GM18951 (cell line): ENCODE measurements at regions of chr5 and their contacts with region 1.

Region 1: DNA sequence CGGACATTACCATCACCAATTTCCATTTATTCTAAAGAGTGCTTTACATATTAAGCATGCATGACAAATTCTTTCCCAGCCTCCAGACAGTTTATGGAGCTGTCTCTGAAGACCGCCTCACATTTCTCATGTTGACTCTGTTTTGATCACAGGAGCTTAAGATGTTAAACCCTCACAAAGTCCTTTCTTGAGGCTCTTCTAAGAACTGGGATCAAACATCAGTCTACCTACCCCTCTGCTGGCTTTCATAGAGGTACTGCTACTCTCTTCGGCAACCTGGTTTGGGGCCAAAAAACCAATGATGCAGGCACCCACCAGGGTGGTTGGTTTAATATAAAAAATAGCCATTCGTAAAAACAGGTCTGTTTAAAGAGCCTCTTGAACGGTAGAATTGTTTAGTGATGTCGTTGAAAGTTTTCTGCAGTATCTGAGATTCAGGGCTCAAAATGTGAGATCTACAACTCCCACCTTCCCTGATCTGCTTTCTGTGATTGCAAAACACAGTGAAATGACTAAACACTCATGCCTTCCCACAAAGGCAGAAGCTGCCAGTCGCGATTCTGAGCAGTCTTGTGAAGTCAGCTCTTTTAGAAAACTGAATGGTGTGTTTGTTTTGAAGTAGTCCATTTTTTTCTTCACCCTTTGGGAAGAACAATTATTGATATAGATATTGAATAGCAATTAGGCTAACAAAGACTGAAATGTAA is 3.5 kb downstream of the RXFP3 start:
- POLR2A ChIP-seq: no peak

Region 2: DNA sequence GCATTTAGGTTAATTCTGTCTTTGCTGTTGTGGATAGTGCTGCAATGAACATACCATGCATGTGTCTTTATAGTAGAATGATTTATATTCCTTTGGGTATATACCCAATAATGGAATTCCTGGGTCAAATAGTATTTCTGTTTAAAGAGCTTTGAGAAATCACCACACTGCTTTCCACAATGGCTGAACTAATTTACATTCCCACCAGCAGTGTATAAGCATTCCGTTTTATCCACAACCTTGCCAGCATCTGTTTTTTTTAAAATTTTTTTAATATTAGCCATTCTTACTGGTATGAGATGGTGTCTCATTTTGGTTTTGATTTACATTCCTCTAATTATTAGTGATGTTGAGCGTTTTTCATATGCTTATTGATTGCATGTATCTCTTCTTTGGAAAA is 514.4 kb before region 1 on chr5:
- in situ Hi-C with region 1: loop called (anchors 5 kb)
- POLR2A ChIP-seq: no peak